ENCODE measurements at regions of chr2 and their contacts with region 1.

Region 1: DNA sequence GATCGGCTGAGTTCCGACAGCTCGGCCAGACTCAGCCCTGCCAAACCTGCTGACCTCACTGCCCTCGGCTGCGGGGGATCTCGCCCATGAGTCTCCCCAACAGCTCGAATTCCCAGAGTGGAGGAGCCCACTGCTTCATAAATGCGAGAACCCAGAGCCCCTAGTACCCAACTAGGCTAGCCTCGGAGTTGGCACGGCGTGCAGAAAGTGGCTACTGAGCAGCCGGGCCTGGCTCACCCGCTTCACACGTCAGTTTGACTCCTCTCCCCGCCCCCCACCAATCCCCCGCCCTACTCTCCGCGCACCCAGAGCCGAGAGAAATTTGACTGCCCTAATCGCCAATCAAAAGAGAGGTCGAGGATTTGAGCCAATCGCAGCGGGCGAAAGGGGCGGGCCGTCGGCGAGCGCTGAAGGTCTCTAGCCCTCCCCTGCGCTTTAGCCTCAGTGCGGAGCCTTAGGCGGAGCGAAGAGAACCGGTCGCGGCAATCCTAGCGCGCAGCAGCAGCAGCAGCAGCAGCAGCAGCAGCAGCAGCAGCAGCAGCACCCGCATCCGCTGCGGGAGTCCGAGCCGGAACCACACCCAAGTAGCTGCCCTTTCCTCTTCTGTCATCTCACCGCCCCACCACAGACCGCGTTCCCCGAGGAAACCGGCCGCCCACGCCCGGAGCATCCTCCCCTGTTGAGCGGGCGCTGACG is at the start of gene GLS:
- DNase-seq: peak; percentile 95
- H3K4me3 Mint-ChIP-seq: peak within 1 kb of the TSS; percentile 91
- H3K27ac Mint-ChIP-seq: peak within 1 kb of the TSS; percentile 97
- H3K4me1 Mint-ChIP-seq: peaks cover 40% of the 10 kb centered on the region
- H3K27me3 Mint-ChIP-seq: no peaks in the 10 kb centered on the region
- total RNA-seq, gene GLS: 220 and 237 TPM in 2 replicates

Region 2: GRCh38 chr2:189661148-189661956 is 1219.2 kb before region 1 on chr2 and contains the start of gene ASNSD1:
- intact Hi-C with region 1: loop called (anchors 2 kb)
- DNase-seq: peak; percentile 99
- H3K4me3 Mint-ChIP-seq: no peak within 1 kb of the TSS
- H3K27ac Mint-ChIP-seq: no peak within 1 kb of the TSS
- H3K4me1 Mint-ChIP-seq: peaks cover 48% of the 10 kb centered on the region
- H3K27me3 Mint-ChIP-seq: no peaks in the 10 kb centered on the region
- total RNA-seq, gene ASNSD1: 58.4 and 61.2 TPM in 2 replicates

Region 3: GRCh38 chr2:190408538-190409271 is 471.8 kb before region 1 on chr2:
- intact Hi-C with region 1: loop called (anchors 1 kb)
- DNase-seq: peak; percentile 66
- H3K4me3 Mint-ChIP-seq: peak overlapping the region; percentile 90
- H3K27ac Mint-ChIP-seq: peak overlapping the region; percentile 94
- H3K4me1 Mint-ChIP-seq: peaks cover 44% of the 10 kb centered on the region
- H3K27me3 Mint-ChIP-seq: no peaks in the 10 kb centered on the region

Region 4: GRCh38 chr2:190718652-190719526 is 161.6 kb before region 1 on chr2:
- intact Hi-C with region 1: loop called (anchors 1 kb)
- DNase-seq: peak; percentile 16
- H3K4me3 Mint-ChIP-seq: peak overlapping the region; percentile 43
- H3K27ac Mint-ChIP-seq: peak overlapping the region; percentile 81
- H3K4me1 Mint-ChIP-seq: peaks cover 64% of the 10 kb centered on the region
- H3K27me3 Mint-ChIP-seq: no peaks in the 10 kb centered on the region

Region 5: DNA sequence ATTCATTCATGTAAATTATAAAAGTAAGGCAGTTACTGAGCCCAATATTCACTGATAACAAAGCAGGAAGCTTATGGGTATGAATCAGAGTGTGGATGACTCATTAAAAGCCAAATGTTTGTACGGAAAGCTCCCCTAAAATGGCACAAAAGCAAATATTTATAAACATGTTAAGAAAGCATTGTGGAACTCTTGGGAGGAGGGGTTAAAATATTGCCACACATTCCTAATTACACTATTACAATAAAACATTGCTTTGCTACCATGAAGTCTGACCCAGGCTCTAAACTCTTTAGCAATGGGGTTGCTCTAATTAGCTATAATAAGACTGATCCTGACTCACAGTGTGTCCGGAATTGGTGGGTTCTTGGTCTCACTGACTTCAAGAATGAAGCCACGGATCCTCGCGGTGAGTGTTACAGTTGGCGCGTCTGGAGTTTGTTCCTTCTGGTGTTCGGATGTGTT is 120.7 kb before region 1 on chr2:
- intact Hi-C with region 1: no loop called
- DNase-seq: no peak
- H3K4me3 Mint-ChIP-seq: no peak overlapping the region
- H3K27ac Mint-ChIP-seq: peak overlapping the region; percentile 4
- H3K4me1 Mint-ChIP-seq: peaks cover 41% of the 10 kb centered on the region
- H3K27me3 Mint-ChIP-seq: no peaks in the 10 kb centered on the region

Region 6: DNA sequence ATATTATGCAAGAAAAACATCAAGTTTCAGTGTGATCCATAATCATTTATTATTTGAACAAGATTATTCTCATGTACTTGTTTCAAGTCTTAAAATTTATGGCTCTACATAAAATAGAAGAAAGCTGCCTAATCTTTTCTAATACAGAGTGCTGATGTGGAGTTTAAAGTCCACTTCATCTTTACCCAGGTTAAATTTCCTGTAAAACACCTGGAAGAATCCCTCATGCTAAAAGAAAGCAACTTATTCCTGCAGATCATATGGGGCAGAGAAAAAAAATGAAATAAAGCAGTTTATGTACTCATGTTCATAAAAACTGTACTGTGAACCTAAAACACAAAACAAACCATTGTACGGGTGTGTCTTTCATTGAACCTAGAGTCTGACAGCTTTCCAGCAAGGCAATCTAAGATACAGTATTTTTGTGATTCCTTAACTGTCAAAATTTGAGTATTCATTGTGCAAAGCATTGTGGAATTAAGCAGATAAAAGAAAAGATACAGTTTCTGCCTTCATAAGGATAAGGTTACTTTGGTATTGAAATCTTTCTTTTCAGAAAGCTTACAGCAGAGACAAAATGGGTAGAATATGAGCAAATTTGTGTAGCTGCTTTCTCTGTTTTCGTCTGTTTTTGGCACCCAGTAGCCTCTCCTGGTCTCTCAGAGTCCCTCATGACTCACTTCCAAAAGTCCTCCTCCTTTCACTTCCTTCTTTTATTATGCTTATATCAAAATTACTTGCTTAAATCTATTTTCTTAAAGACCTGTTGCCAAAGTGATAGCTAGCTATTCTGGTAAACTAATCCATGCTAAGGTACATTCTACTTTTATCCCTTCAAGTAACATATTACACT is 26.8 kb before region 1 on chr2:
- intact Hi-C with region 1: no loop called
- DNase-seq: no peak
- H3K4me3 Mint-ChIP-seq: no peak overlapping the region
- H3K27ac Mint-ChIP-seq: no peak overlapping the region
- H3K4me1 Mint-ChIP-seq: peaks cover 5% of the 10 kb centered on the region
- H3K27me3 Mint-ChIP-seq: peaks cover 2% of the 10 kb centered on the region

Region 7: DNA sequence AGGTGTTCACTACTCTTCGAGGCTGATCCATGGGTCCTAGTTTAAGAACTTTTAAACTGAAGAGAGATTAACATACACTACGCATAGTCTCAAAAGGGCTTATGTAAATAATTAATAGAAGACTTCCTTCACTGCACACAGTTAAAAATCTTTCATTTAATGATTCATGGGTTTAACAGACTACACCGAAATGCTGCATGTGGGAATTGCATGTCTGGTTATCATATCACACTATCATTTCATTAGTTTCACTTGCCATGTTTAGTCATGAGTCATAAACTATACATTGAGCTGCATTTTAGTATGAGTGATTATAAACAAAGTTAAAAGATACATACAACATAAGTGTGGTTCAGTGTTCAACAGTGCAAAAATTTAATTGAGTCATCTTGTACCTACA is 31.3 kb after region 1 on chr2:
- intact Hi-C with region 1: loop called (anchors 1 kb)
- DNase-seq: no peak
- H3K4me3 Mint-ChIP-seq: no peak overlapping the region
- H3K27ac Mint-ChIP-seq: peak overlapping the region; percentile 76
- H3K4me1 Mint-ChIP-seq: peaks cover 29% of the 10 kb centered on the region
- H3K27me3 Mint-ChIP-seq: no peaks in the 10 kb centered on the region

Region 8: GRCh38 chr2:191103774-191104173 is 223.2 kb after region 1 on chr2:
- intact Hi-C with region 1: no loop called
- DNase-seq: no peak
- H3K4me3 Mint-ChIP-seq: no peak overlapping the region
- H3K27ac Mint-ChIP-seq: no peak overlapping the region
- H3K4me1 Mint-ChIP-seq: peaks cover 57% of the 10 kb centered on the region
- H3K27me3 Mint-ChIP-seq: no peaks in the 10 kb centered on the region

Region 9: GRCh38 chr2:191114403-191114886 is 233.9 kb after region 1 on chr2:
- intact Hi-C with region 1: loop called (anchors 2 kb)
- DNase-seq: peak; percentile 26
- H3K4me3 Mint-ChIP-seq: peak overlapping the region; percentile 69
- H3K27ac Mint-ChIP-seq: peak overlapping the region; percentile 96
- H3K4me1 Mint-ChIP-seq: peaks cover 63% of the 10 kb centered on the region
- H3K27me3 Mint-ChIP-seq: no peaks in the 10 kb centered on the region

Measured in activated T-helper 1 cell treated with anti-CD3 and anti-CD28 coated beads, Interleukin-12 subunit alpha, Interleukin-12 subunit beta, Interleukin-2, Interleukin-4 antibody, amounts not matched to agents 30 ng/mL and 10 ng/mL and 1 ng/mL, durations not matched to agents 14 hours and 24 hours and 36 hours (primary cell).